ENCODE measurements at regions of chr11 and their contacts with region 1.

Region 1: DNA sequence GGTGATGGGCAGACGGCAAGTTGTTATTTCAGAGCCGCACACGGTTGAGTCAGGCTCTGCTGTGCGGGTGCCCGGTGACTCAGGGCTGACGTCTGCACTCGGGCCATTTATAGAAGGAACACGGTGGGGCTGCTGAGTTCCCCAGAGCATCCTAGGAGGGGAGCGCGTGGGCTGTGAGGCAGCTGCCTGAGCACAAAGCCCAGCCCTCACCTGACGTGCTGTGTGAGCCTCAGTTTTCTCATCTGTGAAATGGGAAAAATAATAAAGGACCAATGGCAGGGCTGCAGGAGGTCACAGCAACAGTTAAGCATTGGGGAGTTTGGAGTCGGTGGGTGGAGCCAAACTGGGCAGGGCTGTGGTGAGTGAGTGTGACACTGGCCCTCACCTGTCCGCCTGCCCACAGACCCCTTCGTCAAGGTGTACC is 11.3 kb upstream of the RHOD start:
- DNase-seq: peak; percentile 95
- ATAC-seq: peak; percentile 90
- H3K4me3 ChIP-seq: no peak overlapping the region
- H3K27ac ChIP-seq: no peak overlapping the region
- H3K4me1 ChIP-seq: peaks cover 21% of the 10 kb centered on the region
- H3K27me3 ChIP-seq: peaks cover 11% of the 10 kb centered on the region
- CTCF ChIP-seq: 0 out of 2 replicates have a peak, but pooled peaks have one; percentile 17
- POLR2A ChIP-seq: no peak
- RAD21 ChIP-seq: no peak

Region 2: GRCh38 chr11:67160874-67161783 is 115.8 kb after region 1 on chr11:
- CTCF ChIA-PET with region 1: interaction called, 10 read pairs
- POLR2A ChIA-PET with region 1: no interaction called
- dilution Hi-C with region 1: no loop called
- in situ Hi-C with region 1: no loop called
- intact Hi-C with region 1: no loop called
- DNase-seq: peak; percentile 74
- ATAC-seq: peak; percentile 47
- H3K4me3 ChIP-seq: no peak overlapping the region
- H3K27ac ChIP-seq: no peak overlapping the region
- H3K4me1 ChIP-seq: peaks cover 8% of the 10 kb centered on the region
- H3K27me3 ChIP-seq: no peaks in the 10 kb centered on the region
- CTCF ChIP-seq: no peak
- POLR2A ChIP-seq: no peak
- RAD21 ChIP-seq: no peak

Region 3: DNA sequence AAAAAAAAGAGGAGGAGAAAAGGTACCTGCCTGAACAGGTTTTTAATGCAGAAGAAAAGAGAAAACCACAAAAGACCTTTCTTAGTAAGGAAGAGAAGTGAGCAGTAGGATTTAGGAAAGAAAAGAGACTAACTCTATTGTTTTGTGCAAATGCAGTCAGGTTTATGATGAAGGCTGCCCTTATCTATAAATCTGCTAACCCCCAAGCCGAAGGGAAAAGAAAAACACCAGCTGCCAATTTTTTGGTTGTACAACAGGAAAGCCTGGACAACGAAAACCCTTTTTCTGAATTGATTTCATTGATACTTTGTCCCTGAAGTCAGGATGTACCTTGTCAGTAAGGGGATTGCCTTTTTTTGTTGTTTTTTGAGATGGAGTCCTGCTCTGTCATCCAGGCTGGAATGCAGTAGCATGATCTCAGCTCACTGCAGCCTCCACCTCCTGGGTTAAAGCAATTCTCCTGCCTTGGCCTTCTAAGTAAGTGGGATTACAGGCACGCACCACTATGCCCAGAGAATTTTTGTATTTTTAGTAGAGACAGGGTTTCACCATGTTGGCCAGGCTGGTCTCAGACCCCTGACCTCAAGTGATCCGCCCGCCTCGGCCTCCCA is 286.8 kb after region 1 on chr11:
- CTCF ChIA-PET with region 1: no interaction called
- POLR2A ChIA-PET with region 1: no interaction called
- dilution Hi-C with region 1: no loop called
- in situ Hi-C with region 1: no loop called
- intact Hi-C with region 1: no loop called
- DNase-seq: peak; percentile 22
- ATAC-seq: peak; percentile 56
- H3K4me3 ChIP-seq: no peak overlapping the region
- H3K27ac ChIP-seq: no peak overlapping the region
- H3K4me1 ChIP-seq: no peaks in the 10 kb centered on the region
- H3K27me3 ChIP-seq: no peaks in the 10 kb centered on the region
- CTCF ChIP-seq: no peak
- POLR2A ChIP-seq: no peak
- RAD21 ChIP-seq: no peak

Measured in IMR-90 (cell line).